ENCODE measurements at regions of chr13 and their contacts with region 1.

Region 1: GRCh38 chr13:43023289-43023951 is at the start of gene DNAJC15:
- DNase-seq: peak; percentile 41 to 90 (median 76)
- ATAC-seq: peak; percentile 89
- H3K4me3 ChIP-seq: peak within 1 kb of the TSS; percentile 89
- H3K4me3 Mint-ChIP-seq: peak within 1 kb of the TSS; percentile 92
- H3K27ac ChIP-seq: peak within 1 kb of the TSS; percentile 52 to 69
- H3K27ac Mint-ChIP-seq: peak within 1 kb of the TSS; percentile 96
- H3K4me1 ChIP-seq: peaks cover 24% of the 10 kb centered on the region
- H3K4me1 Mint-ChIP-seq: peaks cover 39% of the 10 kb centered on the region
- H3K27me3 ChIP-seq: no peaks in the 10 kb centered on the region
- H3K27me3 Mint-ChIP-seq: no peaks in the 10 kb centered on the region
- CTCF ChIP-seq: no peak
- total RNA-seq, gene DNAJC15: 6.8 to 7.6 TPM

Region 2: DNA sequence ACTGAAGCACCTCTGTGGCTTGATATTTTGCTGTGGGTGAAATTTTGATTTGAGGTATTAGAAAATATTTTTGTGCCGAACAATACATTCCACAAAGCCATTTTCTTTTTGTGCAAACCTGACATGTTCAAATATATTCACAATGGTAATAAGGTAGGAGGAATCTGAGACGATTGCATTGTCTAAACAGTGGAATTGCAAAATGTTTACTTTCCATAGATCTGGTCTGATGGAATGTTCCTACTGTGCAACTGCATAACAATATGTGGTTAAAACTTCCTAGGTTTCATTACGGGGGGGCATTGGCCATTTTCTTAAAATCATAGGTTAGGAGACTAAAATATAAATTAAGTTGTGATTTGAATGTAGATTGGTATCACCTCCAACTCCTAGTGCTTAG is 794.1 kb before region 1 on chr13:
- CTCF ChIA-PET with region 1: no interaction called
- POLR2A ChIA-PET with region 1: no interaction called
- intact Hi-C with region 1: no loop called
- DNase-seq: no peak
- ATAC-seq: no peak
- H3K4me3 ChIP-seq: no peak overlapping the region
- H3K4me3 Mint-ChIP-seq: no peak overlapping the region
- H3K27ac ChIP-seq: no peak overlapping the region
- H3K27ac Mint-ChIP-seq: no peak overlapping the region
- H3K4me1 ChIP-seq: no peaks in the 10 kb centered on the region
- H3K4me1 Mint-ChIP-seq: no peaks in the 10 kb centered on the region
- H3K27me3 ChIP-seq: no peaks in the 10 kb centered on the region
- H3K27me3 Mint-ChIP-seq: no peaks in the 10 kb centered on the region
- CTCF ChIP-seq: no peak

Region 3: GRCh38 chr13:42985312-42986175 is 37.9 kb before region 1 on chr13:
- CTCF ChIA-PET with region 1: interaction called, 4 read pairs
- POLR2A ChIA-PET with region 1: interaction called, 82 read pairs
- intact Hi-C with region 1: loop called in 1 of 2 experiments (anchors 5 kb)
- DNase-seq: no peak
- ATAC-seq: no peak
- H3K4me3 ChIP-seq: no peak overlapping the region
- H3K4me3 Mint-ChIP-seq: no peak overlapping the region
- H3K27ac ChIP-seq: no peak overlapping the region
- H3K27ac Mint-ChIP-seq: no peak overlapping the region
- H3K4me1 ChIP-seq: peaks cover 11% of the 10 kb centered on the region
- H3K4me1 Mint-ChIP-seq: peaks cover 71% of the 10 kb centered on the region
- H3K27me3 ChIP-seq: no peaks in the 10 kb centered on the region
- H3K27me3 Mint-ChIP-seq: no peaks in the 10 kb centered on the region
- CTCF ChIP-seq: no peak

Region 4: DNA sequence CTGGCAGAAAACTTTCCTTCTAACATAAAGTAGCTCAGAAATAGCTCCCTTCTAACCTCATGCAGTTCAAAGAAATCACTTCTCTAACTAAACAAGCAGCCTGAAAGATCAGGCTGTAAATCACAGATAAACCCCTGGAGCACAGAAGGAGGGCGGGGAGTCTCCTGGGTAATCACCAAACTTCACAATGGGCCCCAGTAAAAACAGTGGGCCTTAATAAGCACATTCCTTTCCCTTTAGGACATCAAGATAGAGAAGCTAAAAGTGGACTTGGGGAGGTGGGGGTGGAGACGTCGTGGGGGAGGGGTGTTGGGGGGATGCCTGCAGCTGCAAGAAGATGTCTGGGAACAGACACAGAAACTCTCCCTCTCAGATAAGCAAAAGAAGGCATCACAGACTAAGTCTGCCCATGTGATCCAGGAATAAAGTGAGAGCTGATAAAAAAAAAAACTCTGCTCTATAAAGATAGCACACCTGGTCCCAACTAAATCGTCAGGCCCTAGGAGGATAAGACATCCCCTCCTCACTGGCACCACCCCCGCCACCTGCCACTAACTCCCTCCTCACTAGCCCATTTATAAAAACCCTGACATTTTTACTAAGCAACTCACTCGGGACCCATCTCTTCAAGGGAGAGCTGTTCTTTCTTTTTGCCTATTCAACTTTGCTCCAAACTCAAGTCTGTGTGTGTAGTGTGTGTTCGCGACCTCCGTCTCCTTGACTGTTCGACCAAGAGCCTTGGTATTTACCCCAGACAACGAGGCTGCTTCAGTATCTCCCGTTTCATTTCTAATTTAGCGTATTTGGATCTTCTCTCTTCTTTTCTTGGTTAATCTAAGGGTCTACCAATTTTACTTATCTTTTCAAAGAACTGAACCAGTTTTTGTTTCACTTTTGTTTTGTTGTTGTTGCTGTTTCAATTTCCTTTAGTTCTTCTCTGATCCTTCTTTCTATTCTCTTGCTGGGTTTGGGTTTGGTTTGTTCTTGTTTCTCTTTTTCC is 31.7 kb after region 1 on chr13:
- CTCF ChIA-PET with region 1: interaction called, 3 read pairs
- POLR2A ChIA-PET with region 1: interaction called, 18 read pairs
- intact Hi-C with region 1: loop called (anchors 1 to 5 kb)
- DNase-seq: peak in 7 of 14 experiments; percentile 10 to 69 (median 34)
- ATAC-seq: peak; percentile 46
- H3K4me3 ChIP-seq: peak overlapping the region; percentile 69
- H3K4me3 Mint-ChIP-seq: no peak overlapping the region
- H3K27ac ChIP-seq: peak overlapping the region; percentile 81 to 84
- H3K27ac Mint-ChIP-seq: no peak overlapping the region
- H3K4me1 ChIP-seq: peaks cover 26% of the 10 kb centered on the region
- H3K4me1 Mint-ChIP-seq: peaks cover 5% of the 10 kb centered on the region
- H3K27me3 ChIP-seq: no peaks in the 10 kb centered on the region
- H3K27me3 Mint-ChIP-seq: no peaks in the 10 kb centered on the region
- CTCF ChIP-seq: no peak